Mammary epithelial cell (primary cell): ENCODE measurements at regions of chr12 and their contacts with region 1.

Region 1: DNA sequence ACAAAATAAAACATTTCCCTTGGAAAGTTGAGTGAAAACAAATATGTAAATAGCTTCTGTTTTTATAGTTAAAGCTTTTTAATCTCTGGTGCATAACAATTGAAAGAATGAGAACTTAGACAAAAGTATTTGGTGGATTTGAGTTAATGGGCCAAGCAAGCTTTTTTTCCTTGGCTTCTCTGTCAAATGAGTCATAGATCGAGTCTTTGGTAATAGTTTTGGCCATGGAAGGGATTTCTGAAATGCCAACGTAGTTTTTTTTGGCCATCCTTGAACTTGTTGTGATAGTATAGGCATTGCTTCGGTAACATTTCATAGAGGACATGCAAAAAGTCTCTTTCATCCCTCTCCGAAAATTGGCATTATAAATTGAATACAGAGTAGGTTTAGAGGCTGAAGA is 34.9 kb downstream of the GPR19 start:
- DNase-seq: peak; percentile 46
- H3K4me3 ChIP-seq: no peak overlapping the region
- H3K27ac ChIP-seq: no peak overlapping the region
- H3K4me1 ChIP-seq: peaks cover 6% of the 10 kb centered on the region
- H3K27me3 ChIP-seq: no peaks in the 10 kb centered on the region
- CTCF ChIP-seq: no peak

Region 2: DNA sequence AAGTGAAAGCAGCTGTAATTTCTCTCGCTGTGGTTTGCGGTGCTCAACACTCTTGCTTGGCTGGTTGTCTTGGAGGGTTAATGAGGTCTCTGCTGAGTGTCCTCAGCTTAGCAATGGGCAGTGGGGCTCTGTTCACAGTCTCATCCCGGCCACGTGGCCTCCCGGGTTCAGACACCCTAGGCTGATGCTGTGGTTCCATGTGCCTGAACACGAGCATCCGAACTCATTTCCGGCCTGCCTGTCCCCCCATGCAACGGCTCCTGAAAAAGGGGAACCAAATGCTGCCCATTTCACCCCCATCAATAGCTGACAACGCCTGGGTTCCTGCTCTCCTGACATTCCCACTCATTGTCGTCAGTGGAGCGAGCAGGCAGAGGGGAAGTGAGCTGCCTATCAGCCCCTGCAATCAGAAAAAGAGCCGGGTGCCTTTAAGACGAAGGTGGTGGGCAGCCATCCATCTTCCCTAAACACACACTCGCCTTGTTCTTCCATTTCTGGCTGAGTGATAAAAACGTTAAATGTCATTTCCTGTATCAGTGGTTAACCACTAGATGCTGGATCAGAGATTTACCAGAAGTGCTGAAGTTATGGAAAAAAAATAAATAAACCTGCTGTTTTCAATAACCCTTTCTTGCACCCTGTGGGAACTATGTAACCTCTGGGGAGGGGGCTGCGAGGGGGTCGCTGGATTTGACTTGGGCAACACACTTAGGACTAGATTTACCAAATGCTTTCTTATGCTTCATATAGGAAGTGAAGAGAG is 650.6 kb before region 1 on chr12:
- CTCF ChIA-PET with region 1: interaction called, 19 read pairs
- dilution Hi-C with region 1: no loop called
- in situ Hi-C with region 1: no loop called
- intact Hi-C with region 1: no loop called
- DNase-seq: peak; percentile 88
- H3K4me3 ChIP-seq: no peak overlapping the region
- H3K27ac ChIP-seq: peak overlapping the region; percentile 47
- H3K4me1 ChIP-seq: peaks cover 26% of the 10 kb centered on the region
- H3K27me3 ChIP-seq: no peaks in the 10 kb centered on the region
- CTCF ChIP-seq: no peak

Region 3: GRCh38 chr12:12376646-12377448 is 284.2 kb before region 1 on chr12:
- CTCF ChIA-PET with region 1: no interaction called
- dilution Hi-C with region 1: no loop called
- in situ Hi-C with region 1: no loop called
- intact Hi-C with region 1: loop called (anchors 1 kb)
- DNase-seq: peak; percentile 68
- H3K4me3 ChIP-seq: no peak overlapping the region
- H3K27ac ChIP-seq: no peak overlapping the region
- H3K4me1 ChIP-seq: no peaks in the 10 kb centered on the region
- H3K27me3 ChIP-seq: no peaks in the 10 kb centered on the region
- CTCF ChIP-seq: peak; percentile 61 to 67

Region 4: DNA sequence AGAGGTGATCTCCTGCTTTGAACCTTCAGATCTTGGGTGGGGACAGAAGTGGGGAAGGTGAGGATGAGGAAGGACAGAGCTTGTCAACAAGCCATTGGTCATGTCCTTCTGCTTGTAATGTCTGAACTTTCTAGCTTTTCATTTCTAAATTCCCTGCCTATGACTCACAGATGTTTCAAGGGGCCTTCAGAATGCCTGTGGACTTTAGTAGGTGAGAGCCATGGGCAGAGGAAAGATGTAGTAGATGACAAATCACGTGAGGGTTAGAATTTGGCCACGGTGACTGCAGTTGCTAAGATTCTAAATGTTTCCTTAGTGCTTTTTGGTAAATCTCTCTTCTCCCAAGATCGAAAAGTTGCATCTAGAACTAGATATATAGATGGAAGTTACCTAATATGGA is 68.2 kb before region 1 on chr12:
- CTCF ChIA-PET with region 1: no interaction called
- dilution Hi-C with region 1: loop called (anchors 5 kb)
- in situ Hi-C with region 1: no loop called
- intact Hi-C with region 1: no loop called
- DNase-seq: no peak
- H3K4me3 ChIP-seq: no peak overlapping the region
- H3K27ac ChIP-seq: no peak overlapping the region
- H3K4me1 ChIP-seq: no peaks in the 10 kb centered on the region
- H3K27me3 ChIP-seq: no peaks in the 10 kb centered on the region
- CTCF ChIP-seq: no peak

Region 5: DNA sequence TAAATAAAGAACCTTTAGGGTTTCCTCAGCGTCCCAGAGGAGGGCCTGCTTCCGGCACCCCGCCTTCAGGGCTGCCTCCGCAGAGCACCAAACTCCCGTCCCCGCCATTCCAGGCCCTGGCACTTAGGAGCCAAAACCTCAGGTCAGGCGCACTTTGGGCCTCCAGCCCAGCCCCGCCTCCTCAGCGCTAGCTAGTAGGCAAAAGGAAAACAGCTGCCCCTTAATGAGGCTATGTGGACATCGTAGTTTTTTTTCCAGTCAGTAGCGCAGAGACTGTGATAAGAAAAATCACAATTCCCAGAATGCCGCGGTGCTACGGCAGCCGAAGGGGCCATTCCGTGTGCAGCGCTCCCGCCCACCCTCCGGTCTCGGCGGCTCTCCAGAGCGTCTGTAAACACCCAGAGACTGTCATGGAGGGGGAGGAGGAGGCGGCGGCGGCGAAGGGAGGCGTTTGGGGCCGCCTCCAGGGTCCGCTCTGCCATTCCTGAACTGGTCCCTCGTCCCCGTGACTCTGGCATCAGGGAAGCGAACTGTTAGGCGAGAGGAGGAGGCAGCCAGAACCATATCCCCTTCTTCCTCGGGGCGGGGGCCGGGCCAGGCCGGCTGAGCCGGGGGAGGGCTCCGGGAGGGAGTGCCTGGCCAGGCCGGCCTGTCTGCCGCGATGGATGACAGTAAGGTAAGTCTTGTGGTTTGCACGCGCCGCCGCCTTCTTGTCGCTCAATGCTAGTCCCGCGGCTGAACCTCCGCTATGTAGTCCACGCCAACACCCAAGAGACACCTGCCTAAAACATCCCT is 49.4 kb before region 1 on chr12 and contains the start of gene CREBL2:
- CTCF ChIA-PET with region 1: no interaction called
- dilution Hi-C with region 1: no loop called
- in situ Hi-C with region 1: no loop called
- intact Hi-C with region 1: loop called (anchors 2 kb)
- DNase-seq: peak; percentile 92
- H3K4me3 ChIP-seq: peak within 1 kb of the TSS; percentile 65 to 75 (median 75)
- H3K27ac ChIP-seq: peak within 1 kb of the TSS; percentile 76
- H3K4me1 ChIP-seq: peaks cover 23% of the 10 kb centered on the region
- H3K27me3 ChIP-seq: no peaks in the 10 kb centered on the region
- CTCF ChIP-seq: no peak
- total RNA-seq, gene CREBL2: 18.1 to 40.2 TPM